PC-9 (cell line): ENCODE measurements at regions of chr2 and their contacts with region 1.

Region 1: GRCh38 chr2:160241251-160242137 is 41.4 kb upstream of the ITGB6 start:
- DNase-seq: peak; percentile 71 to 80
- H3K4me3 ChIP-seq: no peak overlapping the region
- H3K27ac ChIP-seq: peak overlapping the region; percentile 84
- H3K4me1 ChIP-seq: peaks cover 29% of the 10 kb centered on the region
- H3K27me3 ChIP-seq: no peaks in the 10 kb centered on the region
- CTCF ChIP-seq: no peak

Region 2: GRCh38 chr2:160229592-160229991 is 11.9 kb before region 1 on chr2:
- CTCF ChIA-PET with region 1: no interaction called
- POLR2A ChIA-PET with region 1: interaction called, 10 read pairs
- intact Hi-C with region 1: no loop called
- DNase-seq: peak in 1 of 2 experiments; percentile 92
- H3K4me3 ChIP-seq: 0 out of 2 replicates have a peak overlapping the region, but pooled peaks have one; percentile 10
- H3K27ac ChIP-seq: peak overlapping the region; percentile 100
- H3K4me1 ChIP-seq: peaks cover 69% of the 10 kb centered on the region
- H3K27me3 ChIP-seq: no peaks in the 10 kb centered on the region
- CTCF ChIP-seq: no peak